MCF 10A (cell line): ENCODE measurements at regions of chr6 and their contacts with region 1.

Region 1: DNA sequence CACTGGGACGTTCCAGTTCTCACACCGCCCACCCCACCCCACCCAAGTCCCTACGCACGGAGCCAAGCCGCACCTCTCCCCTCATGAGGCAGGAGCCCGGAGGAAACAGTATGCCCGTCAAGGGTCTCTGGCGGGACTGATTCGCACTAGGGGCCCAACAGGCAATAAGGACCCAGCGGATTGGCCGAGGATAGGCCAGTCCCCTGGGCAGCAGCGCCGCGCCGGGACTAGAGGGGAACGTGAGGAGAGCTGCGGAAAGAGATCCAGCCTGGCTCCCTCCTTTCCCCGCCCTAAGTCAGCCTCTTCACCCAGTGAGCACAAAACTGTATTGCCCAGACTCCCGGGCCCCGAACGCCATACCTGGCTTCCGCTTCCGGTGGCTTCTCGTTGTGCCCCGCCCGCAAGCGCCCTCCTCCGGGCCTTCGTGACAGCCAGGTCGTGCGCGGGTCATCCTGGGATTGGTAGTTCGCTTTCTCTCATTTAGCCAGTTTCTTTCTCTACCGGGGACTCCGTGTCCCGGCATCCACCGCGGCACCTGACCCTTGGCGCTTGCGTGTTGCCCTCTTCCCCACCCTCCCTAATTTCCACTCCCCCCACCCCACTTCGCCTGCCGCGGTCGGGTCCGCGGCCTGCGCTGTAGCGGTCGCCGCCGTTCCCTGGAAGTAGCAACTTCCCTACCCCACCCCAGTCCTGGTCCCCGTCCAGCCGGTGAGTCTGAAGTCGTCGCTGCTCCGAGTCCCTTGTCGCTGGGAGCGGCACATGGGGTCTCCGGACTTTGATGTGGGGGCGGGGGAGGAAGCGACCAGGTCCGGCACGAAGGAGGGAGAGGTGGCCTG is at the start of gene CSNK2B:
- DNase-seq: peak; percentile 98
- H3K4me3 Mint-ChIP-seq: peak within 1 kb of the TSS; percentile 99
- H3K27ac Mint-ChIP-seq: peak within 1 kb of the TSS; percentile 99
- H3K4me1 Mint-ChIP-seq: peaks cover 31% of the 10 kb centered on the region
- H3K27me3 Mint-ChIP-seq: no peaks in the 10 kb centered on the region
- CTCF ChIP-seq: no peak
- total RNA-seq, gene CSNK2B: 197 and 209 TPM in 2 replicates

Region 2: GRCh38 chr6:31702819-31703522 is 37.3 kb after region 1 on chr6 and contains the start of gene ABHD16A:
- CTCF ChIA-PET with region 1: interaction called, 3 read pairs
- POLR2A ChIA-PET with region 1: interaction called, 24 read pairs
- intact Hi-C with region 1: no loop called
- DNase-seq: peak; percentile 98
- H3K4me3 Mint-ChIP-seq: peak within 1 kb of the TSS; percentile 95
- H3K27ac Mint-ChIP-seq: peak within 1 kb of the TSS; percentile 89
- H3K4me1 Mint-ChIP-seq: peaks cover 5% of the 10 kb centered on the region
- H3K27me3 Mint-ChIP-seq: no peaks in the 10 kb centered on the region
- CTCF ChIP-seq: no peak
- total RNA-seq, gene ABHD16A: 32.1 and 42.7 TPM in 2 replicates

Region 3: DNA sequence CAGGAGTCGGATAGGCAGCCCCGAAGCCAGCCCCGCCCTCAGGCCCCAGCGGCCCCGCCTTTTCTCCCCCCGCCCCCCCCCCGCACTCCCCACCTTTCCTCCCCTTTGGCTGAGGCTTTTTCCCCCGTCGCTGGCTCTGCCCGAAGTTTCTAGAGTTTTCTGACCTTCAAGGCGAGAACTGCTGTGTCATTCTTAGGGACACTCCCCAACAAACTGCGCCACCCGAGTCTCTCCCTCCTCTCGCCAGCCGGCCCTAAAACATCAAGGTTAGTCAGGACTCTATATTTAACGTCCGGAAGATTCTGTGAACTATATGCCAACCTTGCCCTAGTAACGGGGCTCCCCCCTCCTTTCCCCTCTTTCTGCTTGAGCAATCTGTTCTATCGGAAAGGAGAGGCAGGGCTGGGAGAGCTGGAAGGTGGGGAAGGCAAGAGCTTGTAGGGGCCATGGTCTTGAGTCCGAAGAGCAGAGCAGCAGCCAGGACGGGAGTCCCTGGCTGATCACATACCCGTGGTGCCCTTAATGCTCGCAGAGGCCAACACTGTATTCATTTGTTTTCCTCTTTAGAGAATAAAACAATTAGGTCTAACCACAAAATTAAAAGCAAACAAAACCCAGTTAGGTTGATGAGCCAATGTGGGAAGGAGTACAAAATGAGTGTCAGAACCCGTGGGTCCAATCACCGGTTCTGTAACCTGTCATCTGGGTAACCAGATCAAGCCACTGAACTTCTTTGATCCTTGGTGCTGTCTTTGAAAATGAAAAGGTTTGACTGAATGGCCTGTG is 156.5 kb after region 1 on chr6:
- CTCF ChIA-PET with region 1: no interaction called
- POLR2A ChIA-PET with region 1: interaction called, 36 read pairs
- intact Hi-C with region 1: no loop called
- DNase-seq: peak; percentile 94
- H3K4me3 Mint-ChIP-seq: peak overlapping the region; percentile 91
- H3K27ac Mint-ChIP-seq: peak overlapping the region; percentile 99
- H3K4me1 Mint-ChIP-seq: peaks cover 29% of the 10 kb centered on the region
- H3K27me3 Mint-ChIP-seq: no peaks in the 10 kb centered on the region
- CTCF ChIP-seq: no peak

Region 4: GRCh38 chr6:31901953-31902643 is 236.4 kb after region 1 on chr6 and contains the start of gene ZBTB12:
- CTCF ChIA-PET with region 1: no interaction called
- POLR2A ChIA-PET with region 1: interaction called, 12 read pairs
- intact Hi-C with region 1: no loop called
- DNase-seq: peak; percentile 93
- H3K4me3 Mint-ChIP-seq: peak within 1 kb of the TSS; percentile 67
- H3K27ac Mint-ChIP-seq: peak within 1 kb of the TSS; percentile 33
- H3K4me1 Mint-ChIP-seq: peaks cover 24% of the 10 kb centered on the region
- H3K27me3 Mint-ChIP-seq: no peaks in the 10 kb centered on the region
- CTCF ChIP-seq: no peak
- total RNA-seq, gene ZBTB12: 3.6 and 4.0 TPM in 2 replicates